ENCODE measurements at regions of chr2 and their contacts with region 1.

Region 1: DNA sequence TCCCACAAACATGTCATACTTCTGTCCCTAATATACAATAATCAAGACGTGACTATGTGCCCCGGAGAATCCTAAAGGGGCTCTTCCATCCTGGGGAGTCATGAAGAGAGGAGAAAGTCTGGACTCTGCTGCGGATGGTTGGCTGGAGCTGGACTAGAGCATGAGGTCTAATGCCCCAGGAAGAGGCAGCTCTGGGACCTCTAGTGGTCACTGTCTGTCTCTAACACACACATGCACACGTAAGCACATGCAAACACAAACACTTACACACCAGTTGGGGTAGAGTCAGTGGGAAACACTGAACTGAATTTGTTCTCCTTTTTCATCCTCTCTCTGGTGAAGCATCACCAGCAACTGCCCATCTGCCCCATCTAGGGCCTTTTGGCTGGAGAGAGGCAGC is 271.6 kb downstream of the TDRD15 start:
- DNase-seq: no peak
- H3K4me3 ChIP-seq: no peak overlapping the region
- H3K27ac ChIP-seq: no peak overlapping the region
- H3K4me1 ChIP-seq: no peaks in the 10 kb centered on the region
- H3K27me3 ChIP-seq: no peaks in the 10 kb centered on the region
- CTCF ChIP-seq: peak; percentile 20 to 39

Region 2: GRCh38 chr2:21175895-21176646 is 219.3 kb before region 1 on chr2:
- CTCF ChIA-PET with region 1: no interaction called
- dilution Hi-C with region 1: no loop called
- in situ Hi-C with region 1: no loop called
- intact Hi-C with region 1: loop called (anchors 5 kb)
- DNase-seq: no peak
- H3K4me3 ChIP-seq: no peak overlapping the region
- H3K27ac ChIP-seq: no peak overlapping the region
- H3K4me1 ChIP-seq: no peaks in the 10 kb centered on the region
- H3K27me3 ChIP-seq: no peaks in the 10 kb centered on the region
- CTCF ChIP-seq: peak; percentile 19 to 41

Region 3: DNA sequence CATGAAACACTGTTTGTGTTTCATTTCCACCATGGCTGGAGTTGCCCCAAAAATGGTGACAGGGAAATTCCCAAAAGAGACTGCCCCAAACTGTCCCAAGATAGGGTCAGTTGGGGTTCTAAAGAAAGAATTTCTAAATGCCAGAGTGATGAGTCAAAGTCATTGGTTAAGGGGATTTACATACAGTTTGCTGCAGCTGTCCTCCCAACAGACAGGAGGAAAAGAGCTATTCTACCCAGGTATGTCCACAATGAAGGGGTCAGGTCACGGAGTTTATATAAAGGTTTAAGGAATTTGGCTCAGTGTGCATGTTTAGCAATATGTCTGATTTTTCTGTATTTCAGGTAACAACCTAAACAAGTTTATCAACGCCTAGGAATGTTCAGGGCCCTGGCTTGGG is 72.5 kb after region 1 on chr2:
- CTCF ChIA-PET with region 1: no interaction called
- dilution Hi-C with region 1: no loop called
- in situ Hi-C with region 1: no loop called
- intact Hi-C with region 1: no loop called
- DNase-seq: no peak
- H3K4me3 ChIP-seq: no peak overlapping the region
- H3K27ac ChIP-seq: no peak overlapping the region
- H3K4me1 ChIP-seq: no peaks in the 10 kb centered on the region
- H3K27me3 ChIP-seq: no peaks in the 10 kb centered on the region
- CTCF ChIP-seq: no peak

Region 4: GRCh38 chr2:21658907-21659477 is 263.6 kb after region 1 on chr2:
- CTCF ChIA-PET with region 1: no interaction called
- dilution Hi-C with region 1: no loop called
- in situ Hi-C with region 1: no loop called
- intact Hi-C with region 1: no loop called
- DNase-seq: no peak
- H3K4me3 ChIP-seq: no peak overlapping the region
- H3K27ac ChIP-seq: no peak overlapping the region
- H3K4me1 ChIP-seq: no peaks in the 10 kb centered on the region
- H3K27me3 ChIP-seq: no peaks in the 10 kb centered on the region
- CTCF ChIP-seq: no peak